Psoas muscle (tissue), 8 donors: ENCODE measurements at regions of chr16 and their contacts with region 1.

Region 1: DNA sequence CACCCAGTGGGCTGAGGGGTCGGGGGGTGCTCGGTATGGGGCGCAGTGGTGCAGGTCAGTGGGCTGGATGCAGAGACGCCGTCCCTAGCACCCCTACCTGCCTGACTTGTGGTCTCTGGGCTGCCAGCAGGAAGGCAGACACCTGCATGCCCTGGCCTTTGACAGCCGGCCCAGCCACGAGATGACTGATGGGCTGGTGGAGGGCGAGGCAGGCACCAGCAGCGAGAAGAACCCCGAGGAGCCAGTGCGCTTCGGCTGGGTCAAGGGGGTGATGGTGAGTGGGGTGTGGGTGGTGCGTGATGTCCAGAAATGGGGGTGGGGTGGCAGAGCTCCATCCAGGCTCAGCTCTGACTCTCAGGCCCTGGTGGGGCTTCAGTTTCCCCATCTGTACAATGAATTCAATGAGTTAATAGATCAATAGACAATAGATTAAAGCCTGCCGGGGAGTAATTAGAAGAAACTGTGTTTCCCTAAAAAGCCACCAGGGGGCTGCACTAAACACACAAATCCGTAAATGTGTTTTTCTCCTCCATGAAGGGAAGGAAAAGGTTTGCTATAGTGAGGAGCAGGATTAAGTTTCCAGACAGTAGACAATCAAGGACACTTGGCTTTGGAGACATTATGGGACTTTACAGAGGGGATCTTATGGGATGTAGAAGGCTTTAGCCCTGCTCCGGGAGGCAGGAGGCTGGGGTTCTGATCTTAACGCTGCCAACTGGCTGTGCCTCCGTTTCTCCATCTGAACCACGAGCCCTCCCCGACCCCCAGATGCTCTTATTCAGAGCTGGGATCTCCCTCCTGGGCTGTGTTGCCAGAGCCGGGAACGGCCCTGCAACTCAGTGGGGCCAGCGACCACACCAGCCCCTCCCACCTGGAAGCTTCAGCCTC is 2.2 kb downstream of the SLC12A3 start:
- DNase-seq: no peak
- ATAC-seq: peak; percentile 55 to 77 (median 59)
- H3K4me3 ChIP-seq: no peak overlapping the region
- H3K27ac ChIP-seq: no peak overlapping the region
- H3K4me1 ChIP-seq: peaks cover 6% of the 10 kb centered on the region
- H3K27me3 ChIP-seq: no peaks in the 10 kb centered on the region
- CTCF ChIP-seq: peak; percentile 77

Region 2: GRCh38 chr16:56841233-56841632 is 26.0 kb before region 1 on chr16:
- intact Hi-C with region 1: no loop called
- DNase-seq: no peak
- ATAC-seq: no peak
- H3K4me3 ChIP-seq: no peak overlapping the region
- H3K27ac ChIP-seq: no peak overlapping the region
- H3K4me1 ChIP-seq: no peaks in the 10 kb centered on the region
- H3K27me3 ChIP-seq: no peaks in the 10 kb centered on the region
- CTCF ChIP-seq: no peak

Region 3: DNA sequence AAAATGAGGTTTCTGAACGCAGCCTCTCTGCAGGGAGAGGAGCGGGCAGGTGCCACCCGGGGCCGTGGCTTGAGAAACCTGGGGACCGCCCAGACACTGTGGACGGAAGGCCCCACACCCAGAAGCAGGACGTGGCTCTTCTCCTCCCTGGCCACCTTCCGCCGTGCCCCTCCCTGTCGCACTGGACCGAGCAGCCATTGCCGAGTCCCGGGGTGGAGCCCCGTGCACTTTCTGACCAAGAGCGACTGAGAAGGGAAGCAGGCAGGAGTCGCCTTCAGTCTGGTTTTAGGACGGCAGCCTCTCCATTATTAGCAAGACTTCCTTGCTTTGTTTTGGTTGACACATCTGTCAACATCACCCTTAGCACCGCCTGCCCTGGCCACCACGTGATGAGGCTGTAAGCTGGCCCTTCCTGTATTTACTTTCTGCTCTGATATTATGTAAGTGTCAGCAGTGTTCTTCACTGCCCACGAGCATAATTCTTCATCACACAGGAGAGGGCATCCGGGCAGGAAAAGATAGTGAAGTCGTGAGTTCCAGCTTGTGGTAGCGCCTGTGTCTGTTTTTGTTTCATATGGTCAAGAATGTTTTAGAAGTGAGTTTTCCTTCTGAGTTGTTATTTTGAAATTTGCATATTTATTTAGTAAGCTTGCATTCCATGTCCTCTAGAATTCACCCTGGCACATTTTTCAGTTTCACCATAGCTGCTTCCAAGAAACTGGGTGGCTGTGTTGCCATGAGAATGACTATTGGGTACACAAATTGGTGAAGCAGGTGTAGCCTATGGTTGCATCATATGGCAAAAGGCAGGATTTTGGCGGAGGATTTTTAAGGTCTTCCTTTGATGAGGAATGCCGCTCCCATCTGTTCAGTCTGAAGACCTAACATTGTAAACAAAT is 65.8 kb after region 1 on chr16:
- intact Hi-C with region 1: loop called in 1 of 2 experiments (anchors 1 kb)
- DNase-seq: peak; percentile 74 to 89
- ATAC-seq: peak; percentile 72 to 82 (median 78)
- H3K4me3 ChIP-seq: peak overlapping the region; percentile 92
- H3K27ac ChIP-seq: peak overlapping the region; percentile 99
- H3K4me1 ChIP-seq: peaks cover 36% of the 10 kb centered on the region
- H3K27me3 ChIP-seq: no peaks in the 10 kb centered on the region
- CTCF ChIP-seq: no peak

Region 4: GRCh38 chr16:56950881-56951771 is 83.9 kb after region 1 on chr16:
- intact Hi-C with region 1: loop called (anchors 1 to 2 kb)
- DNase-seq: no peak
- ATAC-seq: peak; percentile 67 to 82 (median 70)
- H3K4me3 ChIP-seq: no peak overlapping the region
- H3K27ac ChIP-seq: no peak overlapping the region
- H3K4me1 ChIP-seq: no peaks in the 10 kb centered on the region
- H3K27me3 ChIP-seq: no peaks in the 10 kb centered on the region
- CTCF ChIP-seq: peak; percentile 47